H1 (cell line): ENCODE measurements at regions of chr20 and their contacts with region 1.

Region 1: GRCh38 chr20:43408848-43409576 is 48.7 kb upstream of the SRSF6 start:
- DNase-seq: peak; percentile 39 to 63
- H3K4me3 ChIP-seq: no peak overlapping the region
- H3K27ac ChIP-seq: no peak overlapping the region
- H3K4me1 ChIP-seq: no peaks in the 10 kb centered on the region
- H3K27me3 ChIP-seq: no peaks in the 10 kb centered on the region; a peak in 2 of 7 replicates
- CTCF ChIP-seq: peak in 2 of 3 experiments; percentile 75 to 81; a peak in 3 of 4 replicates
- EP300 ChIP-seq: no peak
- POLR2A ChIP-seq: no peak
- RAD21 ChIP-seq: peak; percentile 95 to 96

Region 2: DNA sequence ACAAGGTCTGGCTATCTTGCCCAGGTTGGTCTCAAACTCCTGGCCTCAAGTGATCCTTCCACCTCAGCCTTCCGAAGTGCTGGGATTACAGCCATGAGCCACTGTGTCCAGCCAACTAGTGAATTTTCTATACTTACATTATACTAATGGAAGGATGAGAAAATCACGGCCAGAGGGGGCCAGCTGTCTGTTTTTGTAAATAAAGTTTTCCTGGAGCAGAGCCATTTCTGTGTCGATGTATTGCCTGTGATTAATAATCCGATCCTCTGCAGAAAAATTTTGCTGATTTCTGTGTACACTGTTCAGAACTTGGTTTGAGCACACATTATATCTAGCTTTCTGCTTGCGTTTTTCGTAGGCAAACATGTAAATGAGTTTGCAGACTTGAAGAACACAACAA is 248.1 kb before region 1 on chr20:
- CTCF ChIA-PET with region 1: no interaction called
- POLR2A ChIA-PET with region 1: no interaction called
- DNase-seq: no peak
- H3K4me3 ChIP-seq: no peak overlapping the region
- H3K27ac ChIP-seq: no peak overlapping the region
- H3K4me1 ChIP-seq: no peaks in the 10 kb centered on the region
- H3K27me3 ChIP-seq: no peaks in the 10 kb centered on the region
- CTCF ChIP-seq: no peak
- EP300 ChIP-seq: no peak
- POLR2A ChIP-seq: no peak
- RAD21 ChIP-seq: no peak

Region 3: GRCh38 chr20:43187476-43188233 is 221.4 kb before region 1 on chr20:
- CTCF ChIA-PET with region 1: interaction called, 15 read pairs
- POLR2A ChIA-PET with region 1: no interaction called
- DNase-seq: peak; percentile 39 to 90
- H3K4me3 ChIP-seq: peak overlapping the region; percentile 30 to 79 (median 52); a peak in 7 of 8 replicates
- H3K27ac ChIP-seq: no peak overlapping the region
- H3K4me1 ChIP-seq: peaks cover 2 to 6% (median 4%) of the 10 kb centered on the region in 4 experiments; a peak in 5 of 7 replicates
- H3K27me3 ChIP-seq: peaks cover 25 to 39% (median 35%) of the 10 kb centered on the region in 4 experiments
- CTCF ChIP-seq: peak; percentile 74 to 85 (median 81)
- EP300 ChIP-seq: no peak
- POLR2A ChIP-seq: no peak
- RAD21 ChIP-seq: peak; percentile 89 to 90

Region 4: DNA sequence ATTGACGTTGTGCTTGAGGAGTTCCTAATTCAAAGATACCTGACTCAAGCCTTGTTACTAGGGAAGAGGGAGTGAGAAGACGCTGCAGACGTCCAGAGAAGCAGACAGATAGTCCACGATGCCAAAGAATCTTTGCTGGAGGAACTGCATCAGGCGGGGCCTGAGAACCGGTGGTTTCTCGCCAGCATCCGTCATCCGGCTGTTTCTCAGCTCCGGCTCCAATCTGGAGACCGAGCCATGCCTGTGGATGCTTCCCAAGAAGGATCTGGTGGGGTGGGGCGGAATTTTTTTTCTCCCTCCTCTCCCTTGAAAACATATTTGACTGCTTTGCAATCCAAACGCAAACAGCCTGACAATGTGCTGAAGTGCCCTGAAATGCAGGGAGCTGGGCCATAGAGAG is 77.1 kb before region 1 on chr20:
- CTCF ChIA-PET with region 1: no interaction called
- POLR2A ChIA-PET with region 1: no interaction called
- DNase-seq: no peak
- H3K4me3 ChIP-seq: no peak overlapping the region
- H3K27ac ChIP-seq: no peak overlapping the region
- H3K4me1 ChIP-seq: no peaks in the 10 kb centered on the region
- H3K27me3 ChIP-seq: no peaks in the 10 kb centered on the region
- CTCF ChIP-seq: no peak
- EP300 ChIP-seq: no peak
- POLR2A ChIP-seq: no peak
- RAD21 ChIP-seq: no peak

Region 5: GRCh38 chr20:43389892-43390626 is 19.0 kb before region 1 on chr20:
- CTCF ChIA-PET with region 1: interaction called, 10 read pairs
- POLR2A ChIA-PET with region 1: no interaction called
- DNase-seq: peak in 1 of 2 experiments; percentile 92
- H3K4me3 ChIP-seq: peak overlapping the region in 1 of 4 experiments; percentile 33; a peak in 1 of 8 replicates
- H3K27ac ChIP-seq: no peak overlapping the region
- H3K4me1 ChIP-seq: peaks cover 0 to 4% (median under 1%) of the 10 kb centered on the region in 4 experiments; a peak in 3 of 7 replicates
- H3K27me3 ChIP-seq: no peaks in the 10 kb centered on the region
- CTCF ChIP-seq: peak; percentile 56 to 94 (median 75)
- EP300 ChIP-seq: no peak
- POLR2A ChIP-seq: no peak
- RAD21 ChIP-seq: peak; percentile 69 to 80

Region 6: GRCh38 chr20:43398676-43399324 is 10.2 kb before region 1 on chr20:
- CTCF ChIA-PET with region 1: interaction called, 18 read pairs
- POLR2A ChIA-PET with region 1: interaction called, 3 read pairs
- DNase-seq: no peak
- H3K4me3 ChIP-seq: no peak overlapping the region
- H3K27ac ChIP-seq: no peak overlapping the region
- H3K4me1 ChIP-seq: no peaks in the 10 kb centered on the region
- H3K27me3 ChIP-seq: no peaks in the 10 kb centered on the region
- CTCF ChIP-seq: no peak
- EP300 ChIP-seq: no peak
- POLR2A ChIP-seq: no peak
- RAD21 ChIP-seq: no peak

Region 7: GRCh38 chr20:43450841-43451799 is 42.1 kb after region 1 on chr20:
- CTCF ChIA-PET with region 1: no interaction called
- POLR2A ChIA-PET with region 1: no interaction called
- DNase-seq: no peak
- H3K4me3 ChIP-seq: no peak overlapping the region
- H3K27ac ChIP-seq: 0 out of 2 replicates have a peak overlapping the region, but pooled peaks have one; percentile 35
- H3K4me1 ChIP-seq: no peaks in the 10 kb centered on the region
- H3K27me3 ChIP-seq: no peaks in the 10 kb centered on the region; a peak in 1 of 7 replicates
- CTCF ChIP-seq: no peak
- EP300 ChIP-seq: no peak
- POLR2A ChIP-seq: no peak
- RAD21 ChIP-seq: no peak